ENCODE measurements at regions of chr1 and their contacts with region 1.

Region 1: DNA sequence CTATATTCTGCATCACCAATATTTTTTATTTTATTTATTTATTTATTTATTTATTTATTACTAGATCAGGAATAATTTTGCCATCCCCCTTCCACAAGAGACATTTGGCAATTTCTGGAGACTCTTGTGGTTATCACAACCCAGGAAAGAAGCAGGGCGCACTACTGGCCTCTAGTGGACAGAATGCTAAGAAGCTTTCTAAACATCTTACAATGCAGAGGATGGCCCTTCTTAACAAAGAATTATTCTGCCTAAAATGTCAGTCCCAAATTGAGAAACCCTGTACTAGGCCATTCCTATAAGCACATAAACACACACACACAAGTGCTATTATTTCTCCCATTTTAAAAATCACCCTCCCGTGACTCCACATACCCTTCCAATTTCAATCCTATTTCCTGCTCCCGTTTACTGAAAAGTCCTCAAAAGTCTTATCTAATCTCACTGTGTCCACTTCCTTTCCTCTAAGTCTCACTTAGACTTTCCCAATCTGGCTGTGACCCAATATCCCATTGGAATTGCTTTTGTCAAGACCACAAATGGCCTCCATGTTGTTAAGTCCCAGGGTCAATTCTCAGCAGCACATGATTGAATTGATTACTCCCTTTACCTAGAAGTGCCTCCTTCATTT is 43.7 kb upstream of the RNF11 start:
- DNase-seq: peak in 4 of 5 donors; percentile 22 to 31 (median 29)
- H3K4me3 ChIP-seq: no peak overlapping the region
- H3K4me3 Mint-ChIP-seq: no peak overlapping the region
- H3K27ac ChIP-seq: no peak overlapping the region
- H3K27ac Mint-ChIP-seq: no peak overlapping the region
- H3K4me1 ChIP-seq: no peaks in the 10 kb centered on the region
- H3K4me1 Mint-ChIP-seq: no peaks in the 10 kb centered on the region
- H3K27me3 ChIP-seq: no peaks in the 10 kb centered on the region
- H3K27me3 Mint-ChIP-seq: peaks cover 3% of the 10 kb centered on the region in 2 donors

Region 2: DNA sequence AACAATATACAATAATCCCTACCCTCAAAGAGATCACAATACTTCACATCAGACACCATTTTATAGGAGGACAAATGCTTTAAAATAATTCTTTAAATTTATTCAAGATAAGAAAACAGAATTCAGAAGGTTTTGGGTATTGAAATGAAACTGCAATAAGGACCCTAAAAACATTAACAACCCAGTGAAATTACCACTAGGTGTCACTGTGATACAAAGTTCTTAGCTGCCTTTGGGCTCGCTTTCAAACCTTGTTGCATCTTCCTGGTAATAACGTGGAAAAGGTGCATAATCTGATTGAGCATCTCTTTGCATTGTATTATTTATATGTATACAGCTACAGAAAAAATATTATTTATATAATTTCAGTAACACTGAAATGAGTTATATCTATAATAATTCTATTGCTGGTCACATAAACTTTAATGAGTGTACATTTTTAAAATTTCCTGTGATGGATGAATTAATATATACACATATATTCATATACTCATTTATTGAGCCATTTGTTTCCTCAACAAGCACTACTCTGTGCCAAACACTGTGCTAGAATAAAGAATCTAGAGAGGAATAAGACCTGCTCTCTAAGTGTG is 417.5 kb before region 1 on chr1:
- CTCF ChIA-PET with region 1: interaction called, 124 read pairs
- POLR2A ChIA-PET with region 1: interaction called, 3 read pairs
- intact Hi-C with region 1: loop called (anchors 1 kb)
- DNase-seq: peak in 4 of 5 donors; percentile 26 to 32 (median 31)
- H3K4me3 ChIP-seq: no peak overlapping the region
- H3K4me3 Mint-ChIP-seq: no peak overlapping the region
- H3K27ac ChIP-seq: no peak overlapping the region
- H3K27ac Mint-ChIP-seq: peak overlapping the region in 1 of 7 donors; percentile 1
- H3K4me1 ChIP-seq: no peaks in the 10 kb centered on the region
- H3K4me1 Mint-ChIP-seq: peaks cover 7 to 13% (median 8%) of the 10 kb centered on the region in 4 donors
- H3K27me3 ChIP-seq: no peaks in the 10 kb centered on the region
- H3K27me3 Mint-ChIP-seq: no peaks in the 10 kb centered on the region

Region 3: GRCh38 chr1:50898773-50899172 is 293.6 kb before region 1 on chr1:
- CTCF ChIA-PET with region 1: no interaction called
- POLR2A ChIA-PET with region 1: no interaction called
- intact Hi-C with region 1: no loop called
- DNase-seq: no peak
- H3K4me3 ChIP-seq: no peak overlapping the region
- H3K4me3 Mint-ChIP-seq: no peak overlapping the region
- H3K27ac ChIP-seq: no peak overlapping the region
- H3K27ac Mint-ChIP-seq: peak overlapping the region in 3 of 7 donors; percentile 2 to 41 (median 27)
- H3K4me1 ChIP-seq: no peaks in the 10 kb centered on the region
- H3K4me1 Mint-ChIP-seq: peaks cover 17 to 27% (median 26%) of the 10 kb centered on the region in 4 donors
- H3K27me3 ChIP-seq: no peaks in the 10 kb centered on the region
- H3K27me3 Mint-ChIP-seq: no peaks in the 10 kb centered on the region

Region 4: GRCh38 chr1:51168266-51168845 is 24.0 kb before region 1 on chr1:
- CTCF ChIA-PET with region 1: interaction called, 18 read pairs
- POLR2A ChIA-PET with region 1: no interaction called
- intact Hi-C with region 1: no loop called
- DNase-seq: no peak
- H3K4me3 ChIP-seq: no peak overlapping the region
- H3K4me3 Mint-ChIP-seq: peak overlapping the region in 1 of 8 donors; percentile 17
- H3K27ac ChIP-seq: no peak overlapping the region
- H3K27ac Mint-ChIP-seq: no peak overlapping the region
- H3K4me1 ChIP-seq: no peaks in the 10 kb centered on the region
- H3K4me1 Mint-ChIP-seq: peaks cover 7 to 13% (median 12%) of the 10 kb centered on the region in 4 donors
- H3K27me3 ChIP-seq: no peaks in the 10 kb centered on the region
- H3K27me3 Mint-ChIP-seq: peaks cover 0 to 8% of the 10 kb centered on the region in 2 donors

Region 5: GRCh38 chr1:51203121-51203873 is 11.0 kb after region 1 on chr1:
- CTCF ChIA-PET with region 1: interaction called, 17 read pairs
- POLR2A ChIA-PET with region 1: no interaction called
- intact Hi-C with region 1: no loop called
- DNase-seq: no peak
- H3K4me3 ChIP-seq: no peak overlapping the region
- H3K4me3 Mint-ChIP-seq: no peak overlapping the region
- H3K27ac ChIP-seq: no peak overlapping the region
- H3K27ac Mint-ChIP-seq: no peak overlapping the region
- H3K4me1 ChIP-seq: no peaks in the 10 kb centered on the region
- H3K4me1 Mint-ChIP-seq: no peaks in the 10 kb centered on the region
- H3K27me3 ChIP-seq: no peaks in the 10 kb centered on the region
- H3K27me3 Mint-ChIP-seq: no peaks in the 10 kb centered on the region

Region 6: GRCh38 chr1:51235673-51236530 is 43.6 kb after region 1 on chr1 and contains the start of gene RNF11:
- CTCF ChIA-PET with region 1: interaction called, 23 read pairs
- POLR2A ChIA-PET with region 1: interaction called, 9 read pairs
- intact Hi-C with region 1: loop called (anchors 5 kb)
- DNase-seq: peak; percentile 90 to 94 (median 94)
- H3K4me3 ChIP-seq: peak within 1 kb of the TSS; percentile 91 to 93
- H3K4me3 Mint-ChIP-seq: peak within 1 kb of the TSS; percentile 94 to 99 (median 98)
- H3K27ac ChIP-seq: peak within 1 kb of the TSS; percentile 81
- H3K27ac Mint-ChIP-seq: peak within 1 kb of the TSS; percentile 87 to 100 (median 99)
- H3K4me1 ChIP-seq: peaks cover 52% of the 10 kb centered on the region
- H3K4me1 Mint-ChIP-seq: peaks cover 15 to 40% (median 32%) of the 10 kb centered on the region in 4 donors
- H3K27me3 ChIP-seq: no peaks in the 10 kb centered on the region
- H3K27me3 Mint-ChIP-seq: no peaks in the 10 kb centered on the region
- total RNA-seq, gene RNF11: 40.8 to 43.4 TPM

Measured in CD4-positive, alpha-beta memory T cell (primary cell).